ENCODE measurements at regions of chr3 and their contacts with region 1.

Region 1: GRCh38 chr3:135694142-135694541 is 271.4 kb upstream of the PPP2R3A start:
- DNase-seq: no peak
- ATAC-seq: no peak
- H3K4me3 ChIP-seq: no peak overlapping the region
- H3K27ac ChIP-seq: no peak overlapping the region
- H3K4me1 ChIP-seq: no peaks in the 10 kb centered on the region
- H3K27me3 ChIP-seq: no peaks in the 10 kb centered on the region
- CTCF ChIP-seq: no peak
- EP300 ChIP-seq: no peak
- POLR2A ChIP-seq: no peak
- RAD21 ChIP-seq: no peak

Region 2: GRCh38 chr3:135678386-135678785 is 15.8 kb before region 1 on chr3:
- CTCF ChIA-PET with region 1: no interaction called
- POLR2A ChIA-PET with region 1: no interaction called
- in situ Hi-C with region 1: no loop called
- intact Hi-C with region 1: no loop called
- DNase-seq: no peak
- ATAC-seq: no peak
- H3K4me3 ChIP-seq: no peak overlapping the region
- H3K27ac ChIP-seq: no peak overlapping the region
- H3K4me1 ChIP-seq: no peaks in the 10 kb centered on the region
- H3K27me3 ChIP-seq: no peaks in the 10 kb centered on the region
- CTCF ChIP-seq: no peak
- EP300 ChIP-seq: no peak
- POLR2A ChIP-seq: no peak
- RAD21 ChIP-seq: no peak

Region 3: DNA sequence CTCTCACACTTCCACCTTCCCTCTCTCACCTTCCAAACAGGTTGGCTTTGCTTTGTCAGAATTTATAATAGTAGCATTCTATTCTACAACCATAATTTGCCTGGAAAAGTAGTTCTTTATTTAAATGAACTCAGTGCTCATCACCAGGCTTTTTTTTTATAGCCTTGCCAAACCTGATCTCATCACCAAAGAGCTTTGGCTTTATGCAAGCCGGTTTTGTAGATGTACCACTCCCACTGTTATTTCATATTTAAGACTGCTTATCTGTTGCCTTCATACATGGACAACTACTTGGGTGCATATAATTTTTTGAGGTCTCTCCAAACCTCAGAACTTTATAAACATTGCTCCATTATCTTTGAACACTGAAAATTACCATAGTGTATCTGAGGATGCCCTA is 25.3 kb after region 1 on chr3:
- CTCF ChIA-PET with region 1: no interaction called
- POLR2A ChIA-PET with region 1: no interaction called
- in situ Hi-C with region 1: no loop called
- intact Hi-C with region 1: loop called (anchors 2 kb)
- DNase-seq: no peak
- ATAC-seq: no peak
- H3K4me3 ChIP-seq: no peak overlapping the region
- H3K27ac ChIP-seq: no peak overlapping the region
- H3K4me1 ChIP-seq: no peaks in the 10 kb centered on the region
- H3K27me3 ChIP-seq: no peaks in the 10 kb centered on the region
- CTCF ChIP-seq: no peak
- EP300 ChIP-seq: no peak
- POLR2A ChIP-seq: no peak
- RAD21 ChIP-seq: no peak

Measured in K562 (cell line).